AG04450 (cell line): ENCODE measurements at regions of chr10 and their contacts with region 1.

Region 1: GRCh38 chr10:52308251-52309031 is 5.6 kb upstream of the DKK1 start:
- DNase-seq: peak; percentile 55
- H3K4me3 ChIP-seq: peak overlapping the region; percentile 56
- H3K27ac ChIP-seq: no peak overlapping the region
- H3K27me3 ChIP-seq: no peaks in the 10 kb centered on the region
- CTCF ChIP-seq: peak; percentile 77

Region 2: DNA sequence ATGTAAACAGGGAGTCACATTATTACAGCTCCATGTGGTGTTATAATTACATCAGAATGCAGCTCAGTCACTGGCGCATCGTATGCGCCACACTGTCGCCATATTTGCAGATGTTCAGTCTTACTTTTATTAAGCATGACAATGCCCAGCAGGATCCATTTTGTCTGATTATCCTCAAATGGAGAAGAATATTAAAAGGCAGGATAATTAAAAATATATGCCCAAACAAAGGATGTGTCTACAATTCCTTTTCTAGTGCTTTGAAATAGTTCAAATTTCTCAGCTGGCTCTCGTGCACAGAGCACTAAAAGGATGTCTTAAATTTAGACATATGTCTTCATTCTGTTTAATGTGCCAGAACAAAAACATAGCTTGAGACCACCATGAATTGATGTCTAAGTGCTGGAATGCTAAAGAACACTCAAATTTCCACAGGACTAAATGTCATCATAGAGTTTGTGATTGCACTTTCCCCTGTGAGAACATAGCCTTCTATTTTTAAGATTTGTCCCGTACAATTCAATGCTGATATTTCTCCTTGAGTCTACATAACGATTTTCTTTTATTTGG is 173.6 kb after region 1 on chr10:
- CTCF ChIA-PET with region 1: interaction called, 472 read pairs
- POLR2A ChIA-PET with region 1: no interaction called
- DNase-seq: no peak
- H3K4me3 ChIP-seq: no peak overlapping the region
- H3K27ac ChIP-seq: no peak overlapping the region
- H3K27me3 ChIP-seq: no peaks in the 10 kb centered on the region
- CTCF ChIP-seq: no peak

Region 3: DNA sequence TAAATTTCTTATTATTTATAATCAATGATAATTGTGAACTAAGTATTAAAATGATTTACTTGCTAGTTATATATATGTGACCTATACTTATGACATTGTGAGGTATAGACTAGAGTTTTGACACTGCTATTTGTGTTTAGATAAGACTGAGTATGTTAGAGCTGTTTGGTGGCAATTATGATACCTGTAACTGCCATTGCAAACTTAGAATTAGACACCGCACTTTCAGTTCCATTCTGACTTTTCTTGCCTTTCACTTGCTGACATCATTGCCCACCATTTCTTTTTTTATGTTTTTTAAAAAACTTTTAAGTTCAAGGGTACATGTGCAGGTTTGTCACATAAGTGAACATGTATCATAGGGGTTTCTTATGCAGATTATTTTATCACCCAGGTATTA is 249.6 kb after region 1 on chr10:
- CTCF ChIA-PET with region 1: interaction called, 10 read pairs
- POLR2A ChIA-PET with region 1: no interaction called
- DNase-seq: no peak
- H3K4me3 ChIP-seq: no peak overlapping the region
- H3K27ac ChIP-seq: no peak overlapping the region
- H3K27me3 ChIP-seq: no peaks in the 10 kb centered on the region
- CTCF ChIP-seq: no peak

Region 4: DNA sequence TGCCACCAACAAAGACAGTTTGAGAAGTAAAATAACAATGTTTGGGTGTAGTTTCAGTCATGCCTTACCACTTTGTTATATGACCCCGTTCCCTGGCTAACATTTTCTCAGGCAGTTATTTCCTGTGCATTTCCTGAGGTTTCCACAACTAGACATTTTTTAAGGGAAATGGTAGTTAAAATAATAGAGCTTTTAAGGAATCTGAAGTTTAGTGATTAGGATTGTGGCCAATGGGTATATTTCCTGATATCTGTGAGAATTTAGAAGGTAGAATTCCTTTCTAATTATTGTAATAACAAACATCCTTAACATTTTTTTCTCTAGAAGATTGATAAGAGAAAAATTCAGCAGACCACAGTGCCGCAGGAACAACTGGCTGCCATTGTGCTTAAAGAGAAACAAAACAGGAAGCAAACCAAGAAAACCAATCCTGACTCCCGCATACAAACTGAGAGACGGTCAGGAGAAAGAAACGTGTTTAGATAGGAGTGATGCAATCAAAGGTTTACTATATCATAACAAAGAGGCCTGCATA is 270.5 kb after region 1 on chr10:
- CTCF ChIA-PET with region 1: interaction called, 10 read pairs
- POLR2A ChIA-PET with region 1: no interaction called
- DNase-seq: peak; percentile 13
- H3K4me3 ChIP-seq: no peak overlapping the region
- H3K27ac ChIP-seq: no peak overlapping the region
- H3K27me3 ChIP-seq: no peaks in the 10 kb centered on the region
- CTCF ChIP-seq: no peak

Region 5: DNA sequence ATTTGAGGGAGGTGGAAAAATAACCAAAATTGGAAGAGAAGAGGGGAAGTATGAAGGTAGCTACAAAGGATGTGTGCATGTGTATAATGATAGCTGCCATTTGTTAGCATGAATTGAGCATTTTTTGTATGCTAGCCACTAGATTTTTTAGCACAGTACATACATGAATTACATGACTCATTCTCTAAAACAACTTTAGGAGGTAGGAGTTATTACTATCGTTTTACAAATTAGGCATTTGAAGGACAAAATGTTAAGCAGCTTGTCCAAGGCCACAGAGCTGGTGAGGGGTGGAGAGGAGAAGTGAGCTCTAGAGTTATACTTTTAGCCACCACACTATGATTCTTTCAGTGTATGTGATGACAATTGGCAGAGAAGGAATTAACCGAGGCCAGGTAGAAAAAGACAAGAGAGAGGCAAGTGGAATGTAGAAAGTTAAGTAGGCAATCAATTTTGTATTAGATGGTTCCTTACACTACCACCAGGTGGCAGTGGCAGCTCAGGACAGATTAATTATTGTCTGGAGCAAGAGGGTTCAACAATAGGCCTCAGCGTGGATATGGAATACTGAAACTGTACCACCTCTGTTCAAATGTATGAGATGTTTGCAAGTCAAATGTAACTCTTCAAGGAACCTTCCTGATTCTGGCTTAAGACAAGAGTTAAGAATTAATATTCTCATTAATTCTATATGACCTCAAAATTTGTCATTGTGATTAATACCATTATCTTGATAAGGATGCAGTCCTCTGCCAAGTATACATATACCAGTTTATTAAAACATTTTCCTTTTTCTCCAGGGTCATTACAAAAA is 336.1 kb after region 1 on chr10:
- CTCF ChIA-PET with region 1: interaction called, 18 read pairs
- POLR2A ChIA-PET with region 1: no interaction called
- DNase-seq: no peak
- H3K4me3 ChIP-seq: no peak overlapping the region
- H3K27ac ChIP-seq: no peak overlapping the region
- H3K27me3 ChIP-seq: no peaks in the 10 kb centered on the region
- CTCF ChIP-seq: peak; percentile 80